PC-9 (cell line): ENCODE measurements at regions of chr9 and their contacts with region 1.

Region 1: GRCh38 chr9:90870621-90871326 is 69.2 kb downstream of the SYK start:
- DNase-seq: peak in 1 of 2 experiments; percentile 32
- H3K4me3 ChIP-seq: no peak overlapping the region
- H3K27ac ChIP-seq: no peak overlapping the region
- H3K4me1 ChIP-seq: 0 out of 2 replicates have a peak, but pooled peaks cover 5% of the 10 kb centered on the region
- H3K27me3 ChIP-seq: no peaks in the 10 kb centered on the region
- CTCF ChIP-seq: peak; percentile 92

Region 2: GRCh38 chr9:90142580-90142979 is 728.2 kb before region 1 on chr9:
- CTCF ChIA-PET with region 1: no interaction called
- POLR2A ChIA-PET with region 1: no interaction called
- intact Hi-C with region 1: loop called (anchors 1 kb)
- DNase-seq: peak in 1 of 2 experiments; percentile 36
- H3K4me3 ChIP-seq: no peak overlapping the region
- H3K27ac ChIP-seq: no peak overlapping the region
- H3K4me1 ChIP-seq: no peaks in the 10 kb centered on the region
- H3K27me3 ChIP-seq: peaks cover 19% of the 10 kb centered on the region
- CTCF ChIP-seq: peak; percentile 71

Region 3: DNA sequence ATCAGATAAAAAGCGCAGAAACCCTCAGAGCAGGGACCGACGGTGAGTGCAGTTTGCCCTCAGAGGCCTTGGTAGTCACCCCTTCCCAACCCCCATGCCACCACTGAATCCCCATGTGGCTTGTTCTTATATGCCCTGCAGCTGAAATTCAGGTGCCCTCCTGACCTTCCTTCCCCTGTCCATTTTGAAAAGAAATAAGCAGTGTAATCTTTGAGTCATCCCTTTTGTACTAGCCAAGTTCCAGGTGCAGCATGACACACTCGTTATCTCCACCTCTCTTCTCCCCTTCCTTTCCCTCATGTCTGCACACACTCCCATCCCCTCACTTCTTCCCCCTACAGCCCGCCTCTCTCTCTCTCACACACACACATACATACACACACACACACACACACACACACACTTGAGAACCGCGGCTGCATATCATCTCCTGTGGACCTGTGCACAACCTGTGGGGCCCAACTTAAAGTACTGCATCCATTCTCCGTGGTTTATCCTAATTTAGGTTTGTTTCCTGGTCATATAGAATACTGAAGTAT is 16.1 kb before region 1 on chr9:
- CTCF ChIA-PET with region 1: no interaction called
- POLR2A ChIA-PET with region 1: no interaction called
- intact Hi-C with region 1: no loop called
- DNase-seq: peak; percentile 44 to 47
- H3K4me3 ChIP-seq: no peak overlapping the region
- H3K27ac ChIP-seq: no peak overlapping the region
- H3K4me1 ChIP-seq: peaks cover 13% of the 10 kb centered on the region
- H3K27me3 ChIP-seq: no peaks in the 10 kb centered on the region
- CTCF ChIP-seq: no peak

Region 4: DNA sequence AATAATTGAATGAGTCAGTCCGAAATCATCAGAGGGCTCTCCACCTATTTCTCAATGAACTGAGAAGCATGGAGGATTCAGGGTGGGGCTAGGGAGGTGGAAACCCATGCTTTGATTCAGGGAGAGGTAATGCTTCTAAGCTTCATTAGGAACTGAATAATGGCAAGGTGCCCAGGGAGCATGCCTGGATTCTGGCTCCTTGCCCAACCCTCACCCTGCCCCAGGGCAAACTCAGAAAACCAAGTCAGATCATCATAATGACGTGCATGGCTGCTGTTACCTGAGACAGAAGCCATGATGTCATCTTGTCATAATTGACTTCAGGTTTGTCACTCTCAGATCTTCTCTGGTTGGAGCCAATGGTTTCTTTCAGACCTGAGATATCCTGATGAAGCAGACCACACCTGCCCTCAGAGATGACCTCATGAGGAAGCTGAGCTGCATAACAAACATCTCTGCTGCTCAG is 130.4 kb after region 1 on chr9:
- CTCF ChIA-PET with region 1: no interaction called
- POLR2A ChIA-PET with region 1: no interaction called
- intact Hi-C with region 1: no loop called
- DNase-seq: peak; percentile 94 to 98
- H3K4me3 ChIP-seq: no peak overlapping the region
- H3K27ac ChIP-seq: peak overlapping the region; percentile 74
- H3K4me1 ChIP-seq: peaks cover 22% of the 10 kb centered on the region
- H3K27me3 ChIP-seq: no peaks in the 10 kb centered on the region
- CTCF ChIP-seq: no peak

Region 5: GRCh38 chr9:91500509-91501011 is 629.8 kb after region 1 on chr9:
- CTCF ChIA-PET with region 1: no interaction called
- POLR2A ChIA-PET with region 1: no interaction called
- intact Hi-C with region 1: no loop called
- DNase-seq: peak; percentile 34 to 73
- H3K4me3 ChIP-seq: peak overlapping the region; percentile 25; the same call in 1 of the 2 replicates
- H3K27ac ChIP-seq: peak overlapping the region; percentile 45
- H3K4me1 ChIP-seq: peaks cover 31% of the 10 kb centered on the region
- H3K27me3 ChIP-seq: no peaks in the 10 kb centered on the region
- CTCF ChIP-seq: no peak